ENCODE measurements at regions of chr7 and their contacts with region 1.

Region 1: GRCh38 chr7:103296901-103297836 is at the start of gene PMPCB:
- DNase-seq: peak; percentile 91
- ATAC-seq: peak; percentile 90
- H3K4me3 ChIP-seq: peak within 1 kb of the TSS; percentile 93
- H3K27ac ChIP-seq: peak within 1 kb of the TSS; percentile 39
- H3K4me1 ChIP-seq: peaks cover 12% of the 10 kb centered on the region
- H3K27me3 ChIP-seq: no peaks in the 10 kb centered on the region
- CTCF ChIP-seq: peak; percentile 86
- total RNA-seq, gene PMPCB: 49.6 and 64.4 TPM in 2 replicates

Region 2: DNA sequence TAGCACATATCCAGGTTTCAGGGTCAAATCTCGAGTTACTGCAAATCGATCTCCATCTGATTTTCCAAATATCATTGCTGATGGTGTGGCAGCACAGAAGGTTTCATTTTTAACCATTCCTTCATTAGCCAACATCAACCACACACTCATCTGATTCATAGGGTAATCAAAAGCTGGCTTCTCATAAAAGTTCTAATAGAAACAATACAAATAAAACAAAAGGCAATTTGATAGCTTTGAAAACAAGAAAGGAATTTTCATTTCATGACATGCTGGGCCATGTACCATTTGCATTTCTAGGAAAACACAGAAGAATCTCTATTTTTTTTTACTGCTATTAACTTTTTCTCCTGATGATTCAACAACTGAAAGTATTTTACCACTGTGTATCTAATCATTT is 296.5 kb after region 1 on chr7:
- CTCF ChIA-PET with region 1: no interaction called
- POLR2A ChIA-PET with region 1: no interaction called
- intact Hi-C with region 1: no loop called
- DNase-seq: peak; percentile 63
- ATAC-seq: peak; percentile 70
- H3K4me3 ChIP-seq: peak overlapping the region; percentile 29; the same call in 1 of the 2 replicates
- H3K27ac ChIP-seq: peak overlapping the region; percentile 60
- H3K4me1 ChIP-seq: peaks cover 34% of the 10 kb centered on the region
- H3K27me3 ChIP-seq: no peaks in the 10 kb centered on the region
- CTCF ChIP-seq: no peak

Region 3: DNA sequence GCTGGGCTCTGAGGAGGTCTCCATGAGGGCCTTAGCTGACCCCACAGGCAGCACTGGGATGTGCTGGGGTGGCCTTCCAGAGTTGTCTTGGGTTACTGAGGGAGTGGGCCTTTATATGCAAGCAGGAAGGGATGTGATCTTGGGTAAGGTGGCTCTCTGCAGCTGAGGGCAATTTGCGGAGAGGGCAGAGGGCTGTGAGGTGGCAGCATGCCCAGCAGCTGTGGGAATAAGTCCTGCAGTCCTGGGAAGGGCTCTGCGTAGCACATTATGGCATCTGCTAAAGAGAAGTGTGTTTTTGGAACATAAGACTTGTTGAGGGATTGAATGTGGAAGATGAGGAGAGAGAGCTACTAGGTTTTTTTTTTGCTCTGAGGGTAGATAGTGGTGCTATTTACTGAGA is 1617.3 kb after region 1 on chr7:
- CTCF ChIA-PET with region 1: no interaction called
- POLR2A ChIA-PET with region 1: no interaction called
- intact Hi-C with region 1: loop called (anchors 10 kb)
- DNase-seq: no peak
- ATAC-seq: no peak
- H3K4me3 ChIP-seq: no peak overlapping the region
- H3K27ac ChIP-seq: no peak overlapping the region
- H3K4me1 ChIP-seq: no peaks in the 10 kb centered on the region
- H3K27me3 ChIP-seq: peaks cover 2% of the 10 kb centered on the region; the same call in 1 of the 2 replicates
- CTCF ChIP-seq: no peak